ENCODE measurements at regions of chr6 and their contacts with region 1.

Region 1: DNA sequence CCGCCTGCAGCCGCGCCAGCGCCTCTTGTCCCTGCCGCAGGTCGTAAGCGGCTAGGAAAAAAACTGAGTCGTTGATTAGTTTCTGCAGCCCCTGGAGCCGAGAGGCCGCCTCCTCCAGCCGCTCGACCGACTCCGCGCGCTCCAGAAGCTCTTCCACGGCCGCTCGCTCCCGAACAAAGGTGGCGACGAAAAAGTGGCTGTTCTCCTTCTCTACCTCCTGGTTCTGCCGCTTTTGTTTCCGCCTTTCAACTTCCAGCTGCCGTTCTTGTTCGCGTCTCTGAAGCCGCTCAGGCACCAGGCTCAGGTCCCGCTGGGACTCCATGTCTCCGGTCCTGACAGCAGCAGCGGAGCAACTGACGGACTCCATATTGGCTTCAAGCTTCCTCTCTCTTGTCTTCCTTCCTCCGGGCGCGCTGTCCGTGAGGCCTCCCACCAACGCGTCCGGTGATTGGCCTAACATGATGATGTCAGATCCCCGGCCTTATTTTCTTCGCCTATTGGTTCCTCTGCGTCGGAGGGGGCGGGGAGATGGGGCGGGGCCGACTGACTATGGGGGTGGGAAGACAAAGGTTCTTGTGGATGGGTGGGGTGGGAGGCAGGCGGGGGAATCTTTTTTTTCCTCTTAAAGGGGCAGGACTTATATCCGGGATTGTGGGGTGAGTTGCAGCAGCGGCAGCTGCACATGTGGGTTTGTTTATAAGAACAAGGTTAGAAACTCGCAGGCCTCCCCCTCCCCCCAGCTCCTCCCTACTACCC is at the start of gene TBCC:
- DNase-seq: peak; percentile 99
- H3K4me3 ChIP-seq: peak within 1 kb of the TSS; percentile 90 to 100 (median 98)
- H3K27ac ChIP-seq: peak within 1 kb of the TSS; percentile 86 to 96
- H3K4me1 ChIP-seq: peaks cover 12 to 64% (median 48%) of the 10 kb centered on the region in 4 experiments
- H3K27me3 ChIP-seq: no peaks in the 10 kb centered on the region

Region 2: DNA sequence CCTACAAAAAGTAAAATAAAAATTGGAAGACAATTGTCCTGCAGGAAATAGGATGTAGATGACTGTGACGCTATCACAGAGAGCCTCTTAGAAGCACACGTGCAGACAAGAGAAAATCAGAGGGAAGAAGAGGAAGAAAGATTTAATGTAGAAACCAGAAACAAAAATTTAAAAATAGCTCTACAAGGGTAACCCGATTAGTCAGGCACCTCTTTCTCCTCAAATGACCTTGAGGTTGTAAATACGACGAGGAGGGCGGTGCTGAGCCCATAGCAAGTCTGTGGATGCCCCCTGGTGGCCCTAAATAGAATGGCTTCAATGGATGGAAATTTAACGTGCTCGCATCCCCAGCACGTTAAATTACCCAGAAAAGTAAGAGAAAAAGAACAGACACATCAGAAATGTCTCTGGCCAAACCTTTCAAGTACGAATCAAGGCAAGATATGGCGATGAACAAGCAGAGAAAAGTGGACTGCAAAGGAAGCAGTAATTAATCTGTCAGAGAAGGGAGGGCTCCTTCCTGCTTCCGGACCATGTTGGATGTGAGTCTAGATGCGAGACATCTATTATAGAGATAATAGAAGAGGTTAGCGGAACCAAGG is 19.3 kb before region 1 on chr6:
- CTCF ChIA-PET with region 1: interaction called, 61 read pairs
- POLR2A ChIA-PET with region 1: interaction called, 15 read pairs
- DNase-seq: peak; percentile 90 to 96 (median 95)
- H3K4me3 ChIP-seq: peak overlapping the region in 6 of 7 experiments; percentile 59 to 97 (median 78)
- H3K27ac ChIP-seq: peak overlapping the region in 1 of 2 experiments; percentile 77
- H3K4me1 ChIP-seq: peaks cover 0 to 14% (median 7%) of the 10 kb centered on the region in 4 experiments
- H3K27me3 ChIP-seq: no peaks in the 10 kb centered on the region

Region 3: DNA sequence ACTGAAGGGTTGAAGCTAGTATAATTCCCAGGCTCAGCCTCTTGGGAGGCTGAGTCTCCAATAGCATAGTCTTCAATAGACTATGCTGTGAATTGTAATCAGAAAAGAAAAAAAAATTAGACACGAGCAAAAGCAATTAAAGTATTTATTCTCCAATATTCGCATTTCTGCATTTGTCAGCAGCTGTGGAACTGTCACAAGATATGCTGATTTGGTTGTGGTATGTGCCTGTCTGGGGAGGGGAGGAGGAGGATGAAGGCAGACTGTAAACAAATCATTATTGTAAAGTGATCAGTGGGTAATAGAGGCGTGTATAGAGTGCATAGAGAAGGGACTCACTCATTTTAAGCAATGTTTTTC is 25.8 kb after region 1 on chr6:
- CTCF ChIA-PET with region 1: interaction called, 9 read pairs
- POLR2A ChIA-PET with region 1: interaction called, 34 read pairs
- DNase-seq: no peak
- H3K4me3 ChIP-seq: peak overlapping the region in 5 of 7 experiments; percentile 40 to 74 (median 57)
- H3K27ac ChIP-seq: peak overlapping the region; percentile 85 to 92
- H3K4me1 ChIP-seq: peaks cover 19 to 42% (median 32%) of the 10 kb centered on the region in 4 experiments
- H3K27me3 ChIP-seq: no peaks in the 10 kb centered on the region

Region 4: GRCh38 chr6:42782622-42783176 is 36.8 kb after region 1 on chr6:
- CTCF ChIA-PET with region 1: interaction called, 4 read pairs
- POLR2A ChIA-PET with region 1: interaction called, 84 read pairs
- DNase-seq: peak; percentile 82 to 91 (median 90)
- H3K4me3 ChIP-seq: peak overlapping the region; percentile 90 to 99 (median 97)
- H3K27ac ChIP-seq: peak overlapping the region; percentile 98 to 99
- H3K4me1 ChIP-seq: peaks cover 23 to 51% (median 36%) of the 10 kb centered on the region in 4 experiments
- H3K27me3 ChIP-seq: no peaks in the 10 kb centered on the region

Region 5: DNA sequence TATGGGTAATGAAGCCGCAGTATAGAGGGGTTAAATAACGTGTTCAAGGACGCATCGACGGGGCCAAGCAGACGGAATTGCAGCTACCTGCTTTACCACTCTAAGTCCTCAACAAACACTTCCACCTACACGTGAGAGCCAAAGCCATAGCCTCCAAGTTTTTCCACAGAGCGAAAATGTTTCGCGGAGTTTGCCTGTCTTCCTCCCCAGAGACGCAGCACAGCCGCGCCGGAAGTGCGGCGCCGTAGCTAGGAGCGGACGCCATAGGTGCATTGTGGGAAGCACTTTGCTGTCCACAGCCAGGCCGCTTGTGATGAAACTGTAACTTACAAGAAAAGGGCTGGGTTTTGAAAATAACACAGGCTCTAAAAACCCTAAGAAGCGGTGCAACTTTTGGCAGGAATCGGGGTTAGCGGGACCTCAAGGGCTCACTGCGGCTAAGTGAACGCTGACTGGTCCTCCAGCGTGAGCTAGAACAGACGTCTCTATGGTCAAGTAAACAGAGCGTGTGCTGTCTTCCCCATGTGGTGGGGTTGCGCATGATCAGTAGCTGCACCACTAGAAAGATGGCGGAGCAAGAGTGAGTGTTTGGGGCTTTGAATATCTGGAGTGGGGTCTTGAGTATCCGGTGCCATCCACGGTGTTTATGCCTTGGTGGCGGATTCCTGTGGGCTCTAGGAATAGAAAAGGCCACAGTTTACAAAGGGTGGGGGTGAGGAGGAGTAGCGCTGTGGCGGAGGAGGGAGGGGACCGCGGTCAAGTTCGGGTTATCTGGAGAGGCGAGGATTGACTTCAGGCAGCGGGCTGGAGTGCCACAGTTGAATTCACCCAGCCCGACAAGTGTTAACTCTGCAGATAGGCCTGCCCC is 133.7 kb after region 1 on chr6 and contains the start of gene RPL7L1:
- CTCF ChIA-PET with region 1: no interaction called
- POLR2A ChIA-PET with region 1: interaction called, 10 read pairs
- DNase-seq: peak; percentile 90 to 94 (median 91)
- H3K4me3 ChIP-seq: peak within 1 kb of the TSS; percentile 63 to 99 (median 92)
- H3K27ac ChIP-seq: peak within 1 kb of the TSS; percentile 93 to 97
- H3K4me1 ChIP-seq: peaks cover 0 to 19% (median 12%) of the 10 kb centered on the region in 4 experiments
- H3K27me3 ChIP-seq: no peaks in the 10 kb centered on the region

Region 6: GRCh38 chr6:42911171-42912021 is 165.5 kb after region 1 on chr6:
- CTCF ChIA-PET with region 1: no interaction called
- POLR2A ChIA-PET with region 1: no interaction called
- DNase-seq: peak in 1 of 3 donors; percentile 33
- H3K4me3 ChIP-seq: peak overlapping the region in 5 of 7 experiments; percentile 19 to 70 (median 59)
- H3K27ac ChIP-seq: no peak overlapping the region
- H3K4me1 ChIP-seq: peaks cover 0 to 7% (median 5%) of the 10 kb centered on the region in 4 experiments
- H3K27me3 ChIP-seq: peaks cover 0 to 5% (median 0%) of the 10 kb centered on the region in 5 experiments